ENCODE measurements at regions of chr5 and their contacts with region 1.

Region 1: GRCh38 chr5:149455889-149456409 is 76.9 kb upstream of the IL17B start:
- DNase-seq: peak; percentile 90
- ATAC-seq: peak; percentile 87
- H3K4me3 ChIP-seq: peak overlapping the region in 1 of 2 experiments; percentile 42; a peak in 2 of 4 replicates
- H3K27ac ChIP-seq: peak overlapping the region; percentile 27
- H3K4me1 ChIP-seq: peaks cover 29 to 71% of the 10 kb centered on the region in 2 experiments
- H3K27me3 ChIP-seq: no peaks in the 10 kb centered on the region
- CTCF ChIP-seq: no peak
- POLR2A ChIP-seq: no peak
- RAD21 ChIP-seq: no peak

Region 2: DNA sequence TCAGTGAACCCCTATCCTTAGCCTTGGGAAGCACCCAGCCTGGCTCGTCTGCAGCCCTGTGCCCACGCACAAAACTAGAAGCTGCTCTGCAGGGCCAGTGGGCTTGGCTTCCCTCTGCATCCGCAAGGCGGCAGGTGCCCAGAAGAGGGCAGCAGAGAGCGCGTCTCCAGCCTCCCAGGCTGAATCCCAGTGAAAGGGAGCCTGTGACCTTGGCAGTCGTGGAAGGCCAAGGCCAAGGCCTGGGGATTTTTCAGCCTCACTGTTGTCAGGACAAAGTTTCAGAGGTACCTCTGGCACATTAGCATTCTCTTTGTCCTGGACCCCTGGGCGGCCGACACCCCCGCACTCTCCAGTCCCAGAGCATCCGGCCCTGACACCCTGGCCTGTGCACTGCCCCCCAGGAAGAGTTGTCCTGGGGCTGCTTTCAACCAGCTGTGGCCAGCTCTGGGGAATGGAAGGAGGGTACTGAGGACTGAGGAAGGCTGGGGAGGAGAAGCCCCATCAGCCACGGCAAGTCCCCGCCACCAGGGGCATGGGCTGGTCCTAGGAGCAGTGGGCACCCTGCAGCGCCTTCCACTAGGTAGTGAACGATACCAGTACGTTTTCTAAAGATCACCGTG is 13.3 kb before region 1 on chr5:
- CTCF ChIA-PET with region 1: interaction called, 10 read pairs
- POLR2A ChIA-PET with region 1: interaction called, 7 read pairs
- RAD21 ChIA-PET with region 1: interaction called, 3 read pairs
- intact Hi-C with region 1: no loop called
- DNase-seq: no peak
- ATAC-seq: peak; percentile 71
- H3K4me3 ChIP-seq: no peak overlapping the region
- H3K27ac ChIP-seq: no peak overlapping the region; the same call in 1 of the 2 replicates
- H3K4me1 ChIP-seq: peaks cover 41 to 77% of the 10 kb centered on the region in 2 experiments
- H3K27me3 ChIP-seq: no peaks in the 10 kb centered on the region
- CTCF ChIP-seq: peak in 2 of 3 experiments; percentile 90 to 91; a peak in 4 of 6 replicates
- POLR2A ChIP-seq: no peak
- RAD21 ChIP-seq: no peak

Region 3: GRCh38 chr5:149551200-149552037 is 95.5 kb after region 1 on chr5 and contains the start of gene CSNK1A1:
- CTCF ChIA-PET with region 1: no interaction called
- POLR2A ChIA-PET with region 1: interaction called, 10 read pairs
- RAD21 ChIA-PET with region 1: no interaction called
- intact Hi-C with region 1: no loop called
- DNase-seq: peak; percentile 96
- ATAC-seq: peak; percentile 93
- H3K4me3 ChIP-seq: peak within 1 kb of the TSS; percentile 85 to 99
- H3K27ac ChIP-seq: peak within 1 kb of the TSS; percentile 93
- H3K4me1 ChIP-seq: peaks cover 11 to 64% of the 10 kb centered on the region in 2 experiments; a peak in 3 of 4 replicates
- H3K27me3 ChIP-seq: no peaks in the 10 kb centered on the region
- CTCF ChIP-seq: peak in 2 of 3 experiments; percentile 76 to 84; a peak in 4 of 6 replicates
- POLR2A ChIP-seq: peak; percentile 84
- RAD21 ChIP-seq: no peak
- total RNA-seq, gene CSNK1A1: 263 TPM